Activated B cell treated with CpG ODN at 0.5 μM for 24 hours (primary cell): ENCODE measurements at regions of chr6 and their contacts with region 1.

Region 1: GRCh38 chr6:62367601-62368000 is 81.6 kb upstream of the KHDRBS2 start:
- DNase-seq: no peak
- ATAC-seq: peak; percentile 89
- H3K4me3 Mint-ChIP-seq: peak overlapping the region; percentile 79
- H3K27ac Mint-ChIP-seq: peak overlapping the region; percentile 85
- H3K4me1 Mint-ChIP-seq: peaks cover 25% of the 10 kb centered on the region
- H3K27me3 Mint-ChIP-seq: no peaks in the 10 kb centered on the region
- CTCF ChIP-seq: no peak

Region 2: GRCh38 chr6:62298745-62299392 is 68.7 kb before region 1 on chr6:
- CTCF ChIA-PET with region 1: interaction called, 3 read pairs
- POLR2A ChIA-PET with region 1: interaction called, 9 read pairs
- intact Hi-C with region 1: loop called (anchors 1 kb)
- DNase-seq: no peak
- ATAC-seq: peak; percentile 66
- H3K4me3 Mint-ChIP-seq: peak overlapping the region; percentile 56
- H3K27ac Mint-ChIP-seq: peak overlapping the region; percentile 86
- H3K4me1 Mint-ChIP-seq: peaks cover 24% of the 10 kb centered on the region
- H3K27me3 Mint-ChIP-seq: no peaks in the 10 kb centered on the region
- CTCF ChIP-seq: no peak

Region 3: DNA sequence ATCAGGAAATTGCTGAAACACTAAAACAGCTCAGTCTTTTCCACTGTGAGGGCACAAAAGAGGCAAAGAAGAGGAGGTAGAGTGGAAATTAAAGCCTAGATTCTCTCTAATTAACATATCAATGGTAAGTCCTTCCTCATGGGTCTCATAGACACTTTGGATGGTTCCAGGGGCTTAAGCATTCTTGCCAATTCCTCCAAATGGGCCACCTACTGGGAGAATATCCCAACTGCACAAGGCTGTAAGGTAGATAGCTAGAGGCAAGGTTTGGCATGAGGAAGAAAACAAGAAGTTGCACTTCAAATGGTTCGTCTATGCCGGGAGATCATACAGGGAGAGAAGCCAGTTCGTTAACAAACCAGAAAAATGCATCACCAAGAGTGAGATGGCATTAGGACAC is 26.0 kb after region 1 on chr6:
- CTCF ChIA-PET with region 1: no interaction called
- POLR2A ChIA-PET with region 1: no interaction called
- intact Hi-C with region 1: loop called (anchors 2 kb)
- DNase-seq: no peak
- ATAC-seq: no peak
- H3K4me3 Mint-ChIP-seq: no peak overlapping the region
- H3K27ac Mint-ChIP-seq: no peak overlapping the region
- H3K4me1 Mint-ChIP-seq: peaks cover 23% of the 10 kb centered on the region
- H3K27me3 Mint-ChIP-seq: no peaks in the 10 kb centered on the region
- CTCF ChIP-seq: no peak

Region 4: DNA sequence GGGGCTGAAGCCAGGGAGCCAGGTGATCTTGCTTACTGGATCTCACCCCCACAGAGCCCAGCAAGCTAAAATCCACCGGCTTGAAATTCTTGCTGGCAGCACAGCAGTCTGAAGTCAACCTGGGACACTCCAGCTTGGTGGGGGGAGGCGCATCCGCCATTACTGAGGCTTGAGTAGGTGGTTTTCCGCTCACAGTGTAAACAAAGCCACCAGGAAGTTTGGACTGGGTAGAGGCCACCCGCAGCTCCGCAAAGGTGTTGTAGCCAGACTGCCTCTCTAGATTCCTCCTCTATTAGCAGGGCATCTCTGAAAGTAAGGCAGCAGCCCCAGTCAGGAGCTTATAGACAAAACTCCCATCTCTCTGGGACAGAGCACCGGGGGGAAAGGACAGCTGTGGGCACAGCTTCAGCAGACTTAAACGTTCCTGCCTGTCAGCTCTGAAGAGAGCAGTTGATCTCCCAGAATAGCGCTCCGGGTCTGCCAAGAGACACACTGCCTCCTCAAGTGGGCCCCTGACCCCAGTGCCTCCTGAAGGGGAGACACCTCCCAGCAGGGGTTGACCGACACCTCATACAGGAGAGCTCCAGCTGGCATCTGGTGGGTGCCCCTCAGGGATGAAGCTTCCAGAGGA is 124.7 kb after region 1 on chr6:
- CTCF ChIA-PET with region 1: no interaction called
- POLR2A ChIA-PET with region 1: no interaction called
- intact Hi-C with region 1: no loop called
- DNase-seq: no peak
- ATAC-seq: no peak
- H3K4me3 Mint-ChIP-seq: no peak overlapping the region
- H3K27ac Mint-ChIP-seq: no peak overlapping the region
- H3K4me1 Mint-ChIP-seq: no peaks in the 10 kb centered on the region
- H3K27me3 Mint-ChIP-seq: no peaks in the 10 kb centered on the region
- CTCF ChIP-seq: no peak